GM13976 (cell line): ENCODE measurements at regions of chr7 and their contacts with region 1.

Region 1: DNA sequence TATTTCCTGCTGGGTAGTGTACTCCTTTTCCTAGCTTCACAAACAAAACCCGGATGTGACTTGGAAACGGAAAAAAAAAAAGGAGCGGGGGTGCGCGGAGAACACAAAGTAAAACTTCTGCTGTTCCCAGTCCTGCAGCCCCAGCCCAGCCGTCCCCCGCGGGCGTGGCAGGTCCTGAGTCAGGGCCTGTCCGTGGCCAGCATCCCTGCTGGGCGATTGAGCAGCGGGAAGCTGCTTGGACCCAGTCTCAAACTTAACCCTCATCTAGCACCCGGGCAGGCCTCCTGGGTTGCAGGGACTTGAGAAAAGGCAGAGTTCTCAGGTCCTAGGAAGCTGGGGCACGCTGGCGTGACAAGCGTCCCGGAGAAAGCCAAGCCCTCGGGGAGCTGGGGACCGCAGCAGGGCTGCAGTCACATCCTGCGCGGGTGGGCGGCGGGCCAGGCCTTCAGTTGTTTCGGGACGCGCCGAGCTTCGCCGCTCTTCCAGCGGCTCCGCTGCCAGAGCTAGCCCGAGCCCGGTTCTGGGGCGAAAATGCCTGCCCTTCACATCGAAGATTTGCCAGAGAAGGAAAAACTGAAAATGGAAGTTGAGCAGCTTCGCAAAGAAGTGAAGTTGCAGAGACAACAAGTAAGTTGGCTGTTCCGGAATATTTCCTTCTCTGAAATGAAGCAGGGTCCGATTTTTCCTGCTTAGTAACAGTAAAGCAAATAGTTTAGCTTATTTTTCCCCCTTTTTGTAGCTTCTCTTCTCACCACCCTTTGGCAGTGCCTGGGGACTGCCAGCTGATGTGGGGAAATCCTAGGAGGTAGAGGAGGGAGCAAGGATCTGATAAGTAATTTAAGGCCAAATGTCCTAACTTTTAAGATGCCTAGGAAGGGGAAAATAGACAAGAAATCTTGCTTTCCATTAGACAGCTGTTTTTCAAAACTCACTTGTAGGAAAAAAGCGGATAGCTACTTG is at the start of gene GNG11:
- DNase-seq: peak; percentile 66
- CTCF ChIP-seq: peak; percentile 34

Region 2: DNA sequence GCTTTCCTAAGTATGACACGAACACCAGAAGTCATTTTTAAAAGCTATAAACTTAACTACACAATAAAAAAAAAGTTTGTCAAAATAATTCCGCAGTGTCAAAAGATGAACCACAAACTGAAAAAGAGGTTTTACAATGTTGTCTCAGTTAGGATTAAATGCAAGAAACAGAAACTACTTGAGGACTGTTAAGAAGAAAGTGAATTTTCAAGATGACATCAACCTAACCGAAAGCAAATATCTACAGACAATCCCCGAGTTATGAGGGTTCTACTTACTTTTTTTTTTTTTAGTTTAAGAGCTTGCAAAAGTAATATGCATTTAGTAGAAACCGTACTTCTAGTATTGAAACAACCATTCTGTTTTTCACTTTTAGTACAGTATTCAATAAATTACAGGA is 93.6 kb before region 1 on chr7:
- in situ Hi-C with region 1: no loop called
- DNase-seq: peak; percentile 5
- CTCF ChIP-seq: no peak

Region 3: GRCh38 chr7:93992423-93993110 is 70.7 kb after region 1 on chr7:
- in situ Hi-C with region 1: no loop called
- DNase-seq: no peak
- CTCF ChIP-seq: no peak

Region 4: GRCh38 chr7:94395141-94396036 is 473.5 kb after region 1 on chr7:
- in situ Hi-C with region 1: loop called (anchors 25 kb)
- DNase-seq: peak; percentile 79
- CTCF ChIP-seq: peak; percentile 53

Region 5: DNA sequence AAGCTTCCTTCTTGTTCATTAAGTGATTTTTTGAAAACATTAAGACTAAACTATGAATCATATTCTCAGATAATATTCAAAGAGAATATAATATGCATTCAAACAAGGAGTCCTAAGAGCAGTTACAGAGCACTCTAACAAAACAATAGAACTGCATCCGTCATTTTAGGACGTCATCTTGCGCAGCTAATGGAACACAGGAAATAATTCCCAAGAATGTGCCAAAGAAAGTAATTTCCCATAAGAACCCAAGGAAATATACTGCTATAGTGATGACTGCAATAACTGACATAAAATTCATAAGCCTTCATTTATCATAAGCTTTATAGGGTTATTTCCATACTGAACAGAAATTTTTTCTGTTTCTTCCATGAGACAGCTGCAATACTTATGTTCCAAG is 559.4 kb after region 1 on chr7:
- in situ Hi-C with region 1: no loop called
- DNase-seq: no peak
- CTCF ChIP-seq: no peak